ENCODE measurements at regions of chr10 and their contacts with region 1.

Region 1: GRCh38 chr10:48363617-48364355 is 57.3 kb downstream of the MAPK8 start:
- DNase-seq: peak; percentile 86
- ATAC-seq: peak; percentile 71
- H3K4me3 ChIP-seq: no peak overlapping the region
- H3K27ac ChIP-seq: 0 out of 2 replicates have a peak overlapping the region, but pooled peaks have one; percentile 9
- H3K4me1 ChIP-seq: peaks cover 27% of the 10 kb centered on the region
- H3K27me3 ChIP-seq: peaks cover 28% of the 10 kb centered on the region
- CTCF ChIP-seq: peak; percentile 93

Region 2: DNA sequence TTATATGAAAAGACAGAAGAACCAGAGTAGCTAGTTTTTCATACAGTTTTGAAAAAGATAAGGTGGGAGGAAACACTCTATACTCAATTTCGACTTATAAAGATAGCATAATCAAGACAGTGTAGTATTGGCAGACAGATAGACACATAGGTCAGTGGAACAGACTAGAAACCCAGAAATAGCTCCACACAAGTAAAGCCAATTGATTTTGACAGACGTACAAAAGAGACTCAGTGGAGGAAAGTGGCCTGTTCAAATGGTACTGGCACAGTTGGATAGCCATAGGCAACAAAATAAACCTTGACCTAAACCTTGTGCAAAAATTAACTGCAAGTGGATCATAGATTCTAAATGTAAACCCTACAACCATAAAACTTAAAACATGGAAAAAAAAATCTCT is 10.5 kb before region 1 on chr10:
- CTCF ChIA-PET with region 1: no interaction called
- POLR2A ChIA-PET with region 1: no interaction called
- intact Hi-C with region 1: no loop called
- DNase-seq: no peak
- ATAC-seq: no peak
- H3K4me3 ChIP-seq: no peak overlapping the region
- H3K27ac ChIP-seq: no peak overlapping the region
- H3K4me1 ChIP-seq: no peaks in the 10 kb centered on the region
- H3K27me3 ChIP-seq: peaks cover 6% of the 10 kb centered on the region
- CTCF ChIP-seq: no peak

Region 3: GRCh38 chr10:48390933-48391845 is 27.4 kb after region 1 on chr10:
- CTCF ChIA-PET with region 1: no interaction called
- POLR2A ChIA-PET with region 1: no interaction called
- intact Hi-C with region 1: loop called (anchors 1 kb)
- DNase-seq: peak; percentile 73
- ATAC-seq: peak; percentile 94
- H3K4me3 ChIP-seq: no peak overlapping the region
- H3K27ac ChIP-seq: peak overlapping the region; percentile 64
- H3K4me1 ChIP-seq: peaks cover 17% of the 10 kb centered on the region
- H3K27me3 ChIP-seq: 0 out of 2 replicates have a peak, but pooled peaks cover 2% of the 10 kb centered on the region
- CTCF ChIP-seq: no peak

Region 4: GRCh38 chr10:48416584-48417232 is 52.9 kb after region 1 on chr10:
- CTCF ChIA-PET with region 1: no interaction called
- POLR2A ChIA-PET with region 1: no interaction called
- intact Hi-C with region 1: loop called (anchors 2 kb)
- DNase-seq: no peak
- ATAC-seq: peak; percentile 33; the same call in 1 of the 2 replicates
- H3K4me3 ChIP-seq: no peak overlapping the region
- H3K27ac ChIP-seq: no peak overlapping the region
- H3K4me1 ChIP-seq: peaks cover 5% of the 10 kb centered on the region; the same call in 1 of the 2 replicates
- H3K27me3 ChIP-seq: no peaks in the 10 kb centered on the region; the same call in 1 of the 2 replicates
- CTCF ChIP-seq: peak; percentile 18; the same call in 1 of the 2 replicates

Region 5: GRCh38 chr10:48506147-48506917 is 142.5 kb after region 1 on chr10:
- CTCF ChIA-PET with region 1: interaction called, 8 read pairs
- POLR2A ChIA-PET with region 1: no interaction called
- intact Hi-C with region 1: loop called (anchors 1 kb)
- DNase-seq: peak; percentile 83
- ATAC-seq: peak; percentile 89
- H3K4me3 ChIP-seq: no peak overlapping the region
- H3K27ac ChIP-seq: no peak overlapping the region
- H3K4me1 ChIP-seq: peaks cover 9% of the 10 kb centered on the region; the same call in 1 of the 2 replicates
- H3K27me3 ChIP-seq: no peaks in the 10 kb centered on the region
- CTCF ChIP-seq: peak; percentile 97

Region 6: DNA sequence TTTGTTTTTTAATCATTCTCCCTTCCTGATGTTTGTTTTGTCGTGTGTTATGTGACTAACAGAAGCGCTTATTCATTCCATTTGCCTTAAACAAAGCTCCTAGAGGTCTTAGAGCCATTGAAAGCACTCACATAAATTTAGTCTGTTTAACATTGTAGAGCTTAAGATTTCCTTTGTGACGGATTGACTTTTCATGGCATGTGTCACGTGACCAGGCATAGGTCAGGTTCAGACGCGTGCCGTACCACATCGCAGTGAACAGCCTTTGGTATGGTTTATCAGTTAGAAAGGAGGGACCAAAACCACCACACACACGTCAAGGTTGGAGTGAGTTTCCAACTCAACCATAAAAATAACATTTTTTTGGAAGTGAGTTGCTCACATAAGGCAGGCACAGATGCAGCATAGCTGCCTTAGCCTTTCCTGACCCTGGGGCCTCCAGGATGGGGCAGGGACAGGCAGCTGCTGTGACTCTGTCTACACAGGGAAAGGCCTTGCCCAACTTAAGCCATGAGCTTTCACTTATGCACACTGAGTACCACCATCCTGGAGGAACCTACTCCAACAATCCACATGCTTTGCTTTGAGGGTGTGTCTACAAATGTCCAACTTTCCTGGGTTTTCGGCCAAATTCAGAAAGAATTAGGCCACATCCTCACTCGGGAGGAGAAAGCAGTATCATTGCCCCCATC is 376.4 kb after region 1 on chr10:
- CTCF ChIA-PET with region 1: interaction called, 14 read pairs
- POLR2A ChIA-PET with region 1: no interaction called
- intact Hi-C with region 1: no loop called
- DNase-seq: no peak
- ATAC-seq: no peak
- H3K4me3 ChIP-seq: no peak overlapping the region
- H3K27ac ChIP-seq: no peak overlapping the region
- H3K4me1 ChIP-seq: no peaks in the 10 kb centered on the region
- H3K27me3 ChIP-seq: peaks cover 87% of the 10 kb centered on the region
- CTCF ChIP-seq: no peak

Region 7: DNA sequence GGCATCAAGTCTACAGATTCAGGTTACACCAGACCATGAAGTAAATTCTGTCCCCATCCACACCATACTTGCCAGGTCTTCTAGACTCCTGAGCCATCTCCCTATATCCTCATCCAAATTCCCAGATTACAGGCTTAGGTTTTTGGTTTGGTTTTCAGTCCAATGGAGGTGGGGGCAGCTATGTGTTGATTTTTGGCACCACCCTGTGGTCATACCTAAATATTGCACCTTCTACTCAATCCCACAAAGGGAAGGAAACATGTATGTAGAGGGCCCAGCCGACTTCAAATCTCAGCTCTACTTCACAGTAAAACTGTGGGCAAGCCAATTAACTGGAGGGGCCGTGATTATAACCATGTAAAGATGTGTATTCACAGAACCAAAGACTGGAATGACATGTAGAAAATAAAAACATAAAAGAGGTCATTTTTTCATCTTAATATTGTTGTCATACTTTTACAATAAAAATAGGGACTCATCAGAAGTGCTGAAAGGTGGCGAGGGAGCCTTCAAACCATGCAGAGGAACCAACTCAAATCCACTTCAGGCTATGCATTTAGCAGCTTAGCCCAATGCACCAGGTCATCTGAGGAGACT is 1155.3 kb after region 1 on chr10:
- CTCF ChIA-PET with region 1: no interaction called
- POLR2A ChIA-PET with region 1: no interaction called
- intact Hi-C with region 1: no loop called
- DNase-seq: peak; percentile 91
- ATAC-seq: peak; percentile 84
- H3K4me3 ChIP-seq: no peak overlapping the region
- H3K27ac ChIP-seq: no peak overlapping the region
- H3K4me1 ChIP-seq: no peaks in the 10 kb centered on the region
- H3K27me3 ChIP-seq: no peaks in the 10 kb centered on the region
- CTCF ChIP-seq: peak; percentile 99